CD8-positive, alpha-beta memory T cell (primary cell): ENCODE measurements at regions of chr12 and their contacts with region 1.

Region 1: GRCh38 chr12:56462565-56462964 is 5.8 kb upstream of the SPRYD4 start:
- DNase-seq: no peak
- H3K4me3 ChIP-seq: no peak overlapping the region
- H3K4me3 Mint-ChIP-seq: no peak overlapping the region
- H3K27ac ChIP-seq: no peak overlapping the region
- H3K27ac Mint-ChIP-seq: no peak overlapping the region
- H3K4me1 ChIP-seq: peaks cover 4% of the 10 kb centered on the region
- H3K4me1 Mint-ChIP-seq: peaks cover 3 to 9% (median 5%) of the 10 kb centered on the region in 3 donors
- H3K27me3 ChIP-seq: no peaks in the 10 kb centered on the region
- H3K27me3 Mint-ChIP-seq: no peaks in the 10 kb centered on the region

Region 2: DNA sequence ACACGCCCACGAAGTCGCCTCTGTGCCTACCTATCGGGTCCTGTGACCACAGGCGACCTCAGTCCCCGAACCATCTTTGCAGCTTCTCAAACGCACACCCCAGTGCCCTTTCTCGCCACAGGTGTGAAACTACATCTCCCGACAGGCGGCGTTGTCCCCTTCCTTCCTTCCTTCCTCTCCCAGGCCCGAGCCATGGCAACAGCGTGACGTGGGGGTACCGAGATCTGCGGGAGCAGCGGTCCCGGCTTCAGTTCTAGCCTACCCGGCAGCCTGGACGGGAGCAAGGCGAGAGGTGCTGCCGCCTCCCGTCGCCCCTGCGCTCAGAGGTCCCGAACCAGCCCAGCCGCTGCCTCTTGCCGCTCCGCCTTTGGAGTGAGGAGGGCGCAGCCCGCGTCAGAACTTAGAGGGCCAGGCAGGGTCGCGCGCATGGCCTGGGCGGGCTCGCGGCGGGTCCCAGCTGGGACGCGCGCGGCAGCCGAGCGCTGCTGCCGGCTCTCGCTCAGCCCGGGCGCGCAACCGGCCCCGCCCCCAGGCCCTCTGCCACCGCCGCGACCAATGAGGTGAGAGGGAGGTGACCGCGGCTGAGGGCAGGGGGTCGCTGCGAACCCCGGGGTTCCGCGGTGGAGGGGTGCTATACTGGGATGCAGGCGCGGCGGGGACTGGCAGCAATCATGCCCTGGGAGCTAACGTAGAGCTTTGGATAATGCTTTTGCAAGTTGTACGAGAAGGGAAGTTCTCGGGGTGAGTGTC is 195.7 kb before region 1 on chr12 and contains the start of gene COQ10A:
- CTCF ChIA-PET with region 1: interaction called, 18 read pairs
- POLR2A ChIA-PET with region 1: interaction called, 3 read pairs
- DNase-seq: peak; percentile 84 to 93 (median 88)
- H3K4me3 ChIP-seq: peak within 1 kb of the TSS; percentile 93
- H3K4me3 Mint-ChIP-seq: peak within 1 kb of the TSS; percentile 89 to 97 (median 95)
- H3K27ac ChIP-seq: peak within 1 kb of the TSS; percentile 98
- H3K27ac Mint-ChIP-seq: peak within 1 kb of the TSS; percentile 80 to 99 (median 96)
- H3K4me1 ChIP-seq: peaks cover 12% of the 10 kb centered on the region
- H3K4me1 Mint-ChIP-seq: peaks cover 18 to 21% (median 21%) of the 10 kb centered on the region in 3 donors
- H3K27me3 ChIP-seq: no peaks in the 10 kb centered on the region
- H3K27me3 Mint-ChIP-seq: no peaks in the 10 kb centered on the region
- total RNA-seq, gene COQ10A: 14.3 to 14.4 TPM

Region 3: DNA sequence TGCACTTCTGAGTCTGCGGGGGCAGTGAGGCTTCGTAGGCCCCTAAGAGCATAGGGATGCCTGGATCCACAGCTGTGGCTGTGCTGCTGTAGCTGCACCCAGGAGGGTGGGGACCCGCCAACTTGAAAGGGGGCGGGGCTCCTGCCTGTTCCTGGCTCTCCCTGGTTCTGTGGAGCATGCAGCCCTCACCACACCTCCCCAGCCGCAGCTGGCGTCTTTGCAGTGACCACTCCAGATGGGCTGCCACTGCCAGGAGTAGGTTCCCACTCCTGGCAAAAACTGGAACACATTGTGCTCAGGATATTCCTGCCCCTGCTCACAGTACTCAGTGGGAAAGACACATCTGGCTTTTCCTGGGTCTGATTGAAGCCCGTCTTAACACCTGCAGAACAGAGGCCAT is 49.2 kb before region 1 on chr12:
- CTCF ChIA-PET with region 1: no interaction called
- POLR2A ChIA-PET with region 1: no interaction called
- DNase-seq: no peak
- H3K4me3 ChIP-seq: no peak overlapping the region
- H3K4me3 Mint-ChIP-seq: no peak overlapping the region
- H3K27ac ChIP-seq: no peak overlapping the region
- H3K27ac Mint-ChIP-seq: no peak overlapping the region
- H3K4me1 ChIP-seq: no peaks in the 10 kb centered on the region
- H3K4me1 Mint-ChIP-seq: no peaks in the 10 kb centered on the region
- H3K27me3 ChIP-seq: no peaks in the 10 kb centered on the region
- H3K27me3 Mint-ChIP-seq: no peaks in the 10 kb centered on the region